ENCODE measurements at regions of chr5 and their contacts with region 1.

Region 1: DNA sequence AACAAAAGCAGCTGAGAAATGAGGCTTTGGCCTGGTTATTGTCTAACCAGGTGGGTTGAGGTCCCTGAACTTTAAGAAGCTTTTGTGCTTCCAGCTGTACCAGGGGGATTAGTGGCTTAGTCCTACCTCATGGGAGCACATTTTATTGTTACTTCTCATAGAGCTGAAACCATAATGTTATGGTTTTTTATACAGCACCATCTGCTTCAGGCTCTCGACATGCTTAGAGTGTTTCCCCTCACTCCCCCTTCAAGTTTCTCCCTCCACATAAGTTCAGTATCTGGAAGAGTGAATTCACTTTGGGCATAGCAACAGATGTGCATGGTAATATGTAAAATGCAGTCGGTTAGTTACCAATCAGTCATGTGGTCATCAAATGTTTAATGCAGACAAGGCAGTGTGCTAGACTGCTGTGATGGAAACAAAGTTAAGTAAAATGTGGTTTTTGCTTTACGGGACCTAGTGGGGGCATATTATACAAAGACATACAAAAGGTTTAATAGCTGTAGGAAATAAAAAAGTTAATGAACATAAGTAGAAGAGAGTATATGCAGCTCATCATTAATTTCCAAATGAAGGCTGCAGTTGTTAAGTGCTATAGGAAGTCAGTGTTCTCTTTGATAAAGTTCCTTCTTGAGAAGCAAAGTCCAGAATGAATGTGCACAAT is 95.9 kb upstream of the SPRY4 start:
- DNase-seq: no peak
- H3K4me3 ChIP-seq: no peak overlapping the region
- H3K27ac ChIP-seq: no peak overlapping the region
- H3K4me1 ChIP-seq: no peaks in the 10 kb centered on the region
- H3K27me3 ChIP-seq: no peaks in the 10 kb centered on the region
- CTCF ChIP-seq: no peak
- POLR2A ChIP-seq: no peak

Region 2: DNA sequence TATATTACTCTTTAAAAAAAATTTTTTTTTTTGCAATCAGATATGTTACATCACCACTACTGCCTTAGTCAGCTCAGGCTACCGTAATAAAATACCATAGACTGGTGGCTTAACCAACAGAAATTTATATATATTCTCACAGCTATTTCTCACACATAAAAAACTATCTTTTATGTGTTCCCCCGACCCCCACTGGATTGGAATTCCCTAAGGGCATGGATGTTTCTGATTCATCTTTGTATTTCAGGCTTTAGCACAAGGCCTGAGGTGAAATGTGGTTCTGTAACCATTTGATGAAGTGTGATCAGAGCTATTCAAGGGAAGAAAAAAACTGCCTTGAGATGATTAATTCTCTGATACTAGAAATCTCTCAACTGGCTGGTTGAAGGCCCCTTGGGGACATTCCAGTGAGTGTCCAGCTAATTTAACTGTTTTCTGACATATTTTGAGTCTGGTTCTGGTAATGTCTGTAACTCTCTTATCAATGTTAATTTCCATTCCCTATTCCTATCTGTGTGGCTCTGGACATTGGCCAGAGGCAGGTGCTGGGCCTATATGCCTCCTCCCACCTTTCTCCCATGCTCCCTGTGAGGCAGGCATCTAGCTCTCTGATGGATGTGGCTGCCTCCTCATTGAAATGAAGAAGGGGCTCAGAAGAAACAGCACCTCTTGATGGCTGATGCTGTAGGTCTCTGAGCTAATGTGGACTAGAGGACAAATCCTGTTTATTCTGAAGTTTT is 1790.2 kb before region 1 on chr5:
- intact Hi-C with region 1: no loop called
- DNase-seq: no peak
- H3K4me3 ChIP-seq: peak overlapping the region; percentile 24 to 62 (median 53)
- H3K27ac ChIP-seq: peak overlapping the region; percentile 21 to 84
- H3K4me1 ChIP-seq: peaks cover 0 to 6% of the 10 kb centered on the region in 2 donors
- H3K27me3 ChIP-seq: no peaks in the 10 kb centered on the region
- CTCF ChIP-seq: no peak
- POLR2A ChIP-seq: no peak

Region 3: GRCh38 chr5:142357474-142358090 is 63.1 kb before region 1 on chr5:
- intact Hi-C with region 1: loop called (anchors 2 kb)
- DNase-seq: no peak
- H3K4me3 ChIP-seq: peak overlapping the region; percentile 61 to 82 (median 71)
- H3K27ac ChIP-seq: peak overlapping the region; percentile 95 to 97
- H3K4me1 ChIP-seq: no peaks in the 10 kb centered on the region
- H3K27me3 ChIP-seq: no peaks in the 10 kb centered on the region
- CTCF ChIP-seq: no peak
- POLR2A ChIP-seq: no peak

Region 4: DNA sequence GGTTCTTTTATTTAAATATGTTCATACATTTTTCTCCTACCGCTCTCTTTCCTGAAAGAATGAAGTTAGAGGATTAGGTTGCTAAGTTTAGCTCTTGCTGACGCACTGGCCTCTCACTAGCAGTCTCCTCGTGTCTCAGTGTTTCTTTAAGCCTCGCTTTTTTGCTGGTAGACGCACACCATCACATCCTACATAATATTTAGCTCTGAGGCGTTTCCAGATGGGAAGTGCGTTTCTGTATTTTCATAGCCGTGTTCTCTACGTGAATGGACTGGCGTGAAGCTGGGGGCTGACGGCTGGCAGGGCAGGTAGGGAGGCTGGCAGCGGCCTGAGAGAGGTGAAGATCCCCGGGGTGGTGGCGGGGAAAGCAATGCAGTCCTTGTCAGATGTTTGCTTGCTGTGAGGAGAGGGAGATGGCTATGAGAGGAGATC is 16.6 kb before region 1 on chr5:
- intact Hi-C with region 1: loop called (anchors 1 kb)
- DNase-seq: no peak
- H3K4me3 ChIP-seq: no peak overlapping the region
- H3K27ac ChIP-seq: peak overlapping the region in 1 of 2 donors; percentile 30
- H3K4me1 ChIP-seq: no peaks in the 10 kb centered on the region
- H3K27me3 ChIP-seq: peaks cover 0 to 2% of the 10 kb centered on the region in 2 donors
- CTCF ChIP-seq: no peak
- POLR2A ChIP-seq: no peak

Measured in breast epithelium (tissue), 4 donors.